Activated naive CD4-positive, alpha-beta T cell treated with anti-CD3 and anti-CD28 coated beads for 36 hours (primary cell): ENCODE measurements at regions of chr1 and their contacts with region 1.

Region 1: GRCh38 chr1:35192853-35193664 is at the start of gene SFPQ:
- DNase-seq: peak; percentile 98
- H3K4me3 Mint-ChIP-seq: peak within 1 kb of the TSS; percentile 96
- H3K27ac Mint-ChIP-seq: peak within 1 kb of the TSS; percentile 98
- H3K4me1 Mint-ChIP-seq: peaks cover 39% of the 10 kb centered on the region
- H3K27me3 Mint-ChIP-seq: no peaks in the 10 kb centered on the region
- total RNA-seq, gene SFPQ: 260 to 269 TPM

Region 2: DNA sequence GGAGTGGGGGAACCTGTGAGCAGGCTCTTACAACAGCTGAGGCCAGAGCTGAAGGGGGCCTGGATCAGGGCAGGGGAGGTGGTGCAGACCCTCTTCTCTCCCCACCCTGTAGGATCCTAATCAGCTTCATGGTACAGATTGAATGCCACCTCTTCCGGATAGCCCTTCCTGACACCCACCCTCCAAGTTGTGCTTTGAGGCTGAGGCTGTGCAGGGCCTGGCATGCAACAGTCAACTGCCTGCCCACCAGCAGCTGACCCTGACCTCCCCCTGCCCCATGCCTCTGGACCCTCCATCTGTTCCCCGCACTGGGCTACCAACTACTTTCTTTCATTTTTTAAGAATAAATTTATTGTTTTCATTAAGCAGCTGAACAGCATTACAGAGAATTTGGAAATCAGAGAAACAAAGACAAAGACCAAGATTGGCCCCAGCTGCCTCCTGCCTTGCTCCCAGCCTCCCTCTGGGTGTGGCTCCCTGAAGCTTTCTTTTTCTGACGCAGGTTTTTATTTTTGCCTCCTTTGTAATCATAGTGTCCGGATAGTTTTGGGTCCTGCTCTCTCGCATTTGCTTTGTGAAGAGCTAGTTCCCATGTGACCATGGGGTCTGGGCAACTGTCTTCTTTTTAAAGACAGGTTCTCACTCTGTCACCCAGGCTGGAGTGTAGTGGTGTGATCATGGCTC is 1924.0 kb before region 1 on chr1:
- CTCF ChIA-PET with region 1: no interaction called
- intact Hi-C with region 1: no loop called
- DNase-seq: no peak
- H3K4me3 Mint-ChIP-seq: no peak overlapping the region
- H3K27ac Mint-ChIP-seq: no peak overlapping the region
- H3K4me1 Mint-ChIP-seq: peaks cover 24% of the 10 kb centered on the region
- H3K27me3 Mint-ChIP-seq: no peaks in the 10 kb centered on the region

Region 3: GRCh38 chr1:34786521-34787325 is 406.3 kb before region 1 on chr1:
- CTCF ChIA-PET with region 1: no interaction called
- intact Hi-C with region 1: loop called (anchors 1 kb)
- DNase-seq: peak; percentile 86
- H3K4me3 Mint-ChIP-seq: no peak overlapping the region
- H3K27ac Mint-ChIP-seq: no peak overlapping the region
- H3K4me1 Mint-ChIP-seq: peaks cover 4% of the 10 kb centered on the region
- H3K27me3 Mint-ChIP-seq: peaks cover 24% of the 10 kb centered on the region

Region 4: GRCh38 chr1:35030756-35031446 is 162.2 kb before region 1 on chr1:
- CTCF ChIA-PET with region 1: no interaction called
- intact Hi-C with region 1: loop called (anchors 1 kb)
- DNase-seq: peak; percentile 64
- H3K4me3 Mint-ChIP-seq: peak overlapping the region; percentile 93
- H3K27ac Mint-ChIP-seq: peak overlapping the region; percentile 93
- H3K4me1 Mint-ChIP-seq: peaks cover 39% of the 10 kb centered on the region
- H3K27me3 Mint-ChIP-seq: no peaks in the 10 kb centered on the region

Region 5: DNA sequence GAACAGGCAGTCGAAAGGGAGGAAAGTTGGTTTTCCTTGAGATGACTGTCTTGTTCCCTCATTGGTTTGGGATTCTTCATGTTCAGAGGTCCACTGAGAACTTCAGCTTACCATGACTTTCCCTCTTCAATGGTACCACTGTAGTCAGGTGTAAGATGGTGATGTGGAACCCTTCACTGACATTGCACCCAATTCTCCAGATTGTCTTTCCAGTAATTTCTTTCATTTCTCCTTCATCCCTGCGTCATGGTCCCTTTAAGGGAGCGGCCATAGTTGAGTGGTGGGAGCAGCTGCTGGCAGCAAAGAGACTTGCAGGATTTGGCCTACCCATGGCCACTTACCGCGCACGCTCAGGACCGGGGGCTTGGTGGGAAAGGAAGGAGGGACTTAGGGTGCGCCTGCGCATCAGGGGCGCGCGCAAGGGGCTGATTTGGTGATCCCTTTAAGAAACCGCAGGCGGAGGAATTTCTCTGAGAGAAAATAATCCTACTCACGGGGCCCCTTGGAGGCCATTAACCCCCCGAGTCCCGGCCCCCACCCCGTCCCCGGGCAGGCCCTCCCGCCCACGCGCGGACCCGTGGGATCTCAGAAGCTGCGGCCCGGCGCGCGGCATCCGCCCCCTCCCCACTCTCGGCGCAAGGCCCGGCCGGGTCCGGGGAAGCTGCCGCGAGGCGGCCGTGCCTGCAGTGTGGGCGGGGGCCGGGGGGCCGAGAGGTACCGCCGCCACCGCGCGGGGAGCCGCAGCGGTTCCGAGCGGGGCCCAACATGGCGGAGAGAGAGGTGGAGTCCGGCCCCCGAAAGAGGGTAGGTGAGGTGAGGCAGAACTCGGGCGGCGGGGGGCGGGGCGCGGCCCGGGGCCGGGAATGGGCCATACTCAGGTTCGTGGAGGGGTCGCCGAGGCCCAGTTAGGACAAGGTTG is 75.5 kb after region 1 on chr1 and contains the start of gene ZMYM4:
- CTCF ChIA-PET with region 1: interaction called, 3 read pairs
- intact Hi-C with region 1: loop called (anchors 1 kb)
- DNase-seq: peak; percentile 91
- H3K4me3 Mint-ChIP-seq: peak within 1 kb of the TSS; percentile 80
- H3K27ac Mint-ChIP-seq: peak within 1 kb of the TSS; percentile 82
- H3K4me1 Mint-ChIP-seq: peaks cover 22% of the 10 kb centered on the region
- H3K27me3 Mint-ChIP-seq: peaks cover 4% of the 10 kb centered on the region
- total RNA-seq, gene ZMYM4: 18.6 to 19.2 TPM

Region 6: GRCh38 chr1:35319988-35320713 is 127.1 kb after region 1 on chr1:
- CTCF ChIA-PET with region 1: no interaction called
- intact Hi-C with region 1: no loop called
- DNase-seq: no peak
- H3K4me3 Mint-ChIP-seq: no peak overlapping the region
- H3K27ac Mint-ChIP-seq: no peak overlapping the region
- H3K4me1 Mint-ChIP-seq: peaks cover 13% of the 10 kb centered on the region
- H3K27me3 Mint-ChIP-seq: no peaks in the 10 kb centered on the region

Region 7: DNA sequence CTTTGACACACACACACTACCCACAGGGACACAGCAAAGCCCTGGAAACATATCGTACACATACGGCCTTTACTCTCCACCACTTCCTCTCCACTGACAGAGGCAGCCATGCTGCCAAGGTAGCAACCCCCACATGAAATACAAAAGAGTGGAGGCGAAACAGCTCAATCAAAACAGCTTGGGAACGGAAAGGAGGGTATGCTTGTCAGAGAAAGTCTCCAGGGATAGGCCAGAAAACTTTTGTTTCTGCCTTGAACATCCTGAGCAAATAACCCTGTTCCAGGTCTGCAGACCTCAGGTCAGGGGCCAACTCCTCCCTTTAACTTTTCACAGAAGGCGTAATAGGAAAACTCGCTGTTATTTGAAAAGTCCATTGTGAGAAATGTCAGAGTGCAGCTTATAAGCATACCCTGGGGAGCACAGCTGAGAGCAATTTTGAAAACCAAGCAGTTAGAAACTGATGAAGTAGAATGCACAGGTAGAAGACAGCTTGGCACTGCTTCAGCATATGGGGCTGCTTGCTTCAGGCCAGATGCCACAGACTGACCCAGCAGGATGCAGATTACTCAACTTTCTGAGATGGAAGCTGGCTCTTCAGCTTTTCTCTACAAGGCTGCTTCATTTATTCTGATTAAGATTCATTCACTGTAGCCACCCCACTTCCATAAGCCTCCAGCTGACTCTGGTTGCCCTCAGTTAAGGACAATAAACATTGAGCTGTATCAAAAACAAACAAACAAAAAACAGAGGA is 346.2 kb after region 1 on chr1:
- CTCF ChIA-PET with region 1: no interaction called
- intact Hi-C with region 1: loop called (anchors 5 kb)
- DNase-seq: peak; percentile 49
- H3K4me3 Mint-ChIP-seq: peak overlapping the region; percentile 70
- H3K27ac Mint-ChIP-seq: peak overlapping the region; percentile 90
- H3K4me1 Mint-ChIP-seq: peaks cover 78% of the 10 kb centered on the region
- H3K27me3 Mint-ChIP-seq: no peaks in the 10 kb centered on the region

Region 8: DNA sequence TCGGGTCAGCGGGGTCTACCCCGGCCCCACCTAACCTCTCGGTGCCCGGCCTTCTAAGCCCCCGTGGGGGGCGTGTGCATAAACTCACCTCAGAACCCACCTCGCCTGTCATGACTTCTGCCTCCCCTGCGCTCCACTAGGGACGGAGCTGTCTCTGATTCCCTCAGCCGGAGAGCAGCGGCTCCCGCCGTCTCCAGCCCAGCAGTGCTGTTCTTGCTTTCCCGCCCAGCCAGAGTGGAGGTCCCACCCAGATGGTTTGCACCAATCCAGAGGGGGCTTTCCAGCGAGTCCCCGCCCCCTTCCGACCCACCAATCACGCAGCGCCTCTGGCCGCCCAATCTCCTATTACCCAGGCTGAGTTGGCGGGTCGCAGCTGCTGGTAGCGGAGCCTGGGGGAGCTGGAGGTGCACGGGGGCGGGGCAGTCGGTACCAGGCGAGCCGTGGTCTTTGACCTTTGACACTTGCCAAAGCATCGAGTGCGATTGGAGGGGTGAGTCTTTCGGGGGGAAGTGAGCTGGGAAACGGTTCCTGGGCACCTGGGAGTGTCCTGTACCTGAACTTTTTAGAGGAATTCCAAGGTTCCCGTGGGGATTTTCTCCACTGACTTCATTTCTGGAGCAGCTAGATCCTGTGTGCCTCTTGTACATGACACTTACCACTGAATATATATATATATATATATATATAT is 576.8 kb after region 1 on chr1 and contains the start of gene CLSPN:
- CTCF ChIA-PET with region 1: no interaction called
- intact Hi-C with region 1: loop called (anchors 2 kb)
- DNase-seq: peak; percentile 98
- H3K4me3 Mint-ChIP-seq: peak within 1 kb of the TSS; percentile 98
- H3K27ac Mint-ChIP-seq: peak within 1 kb of the TSS; percentile 97
- H3K4me1 Mint-ChIP-seq: peaks cover 8% of the 10 kb centered on the region
- H3K27me3 Mint-ChIP-seq: no peaks in the 10 kb centered on the region
- total RNA-seq, gene CLSPN: 48.9 to 51.8 TPM